ENCODE measurements at regions of chr19 and their contacts with region 1.

Region 1: GRCh38 chr19:8355631-8356402 is 8.1 kb upstream of the ANGPTL4 start:
- DNase-seq: peak; percentile 72
- ATAC-seq: peak; percentile 91
- H3K4me3 ChIP-seq: no peak overlapping the region
- H3K27ac ChIP-seq: no peak overlapping the region
- H3K4me1 ChIP-seq: peaks cover 33% of the 10 kb centered on the region
- H3K27me3 ChIP-seq: no peaks in the 10 kb centered on the region
- CTCF ChIP-seq: no peak

Region 2: GRCh38 chr19:8396563-8397203 is 40.9 kb after region 1 on chr19:
- intact Hi-C with region 1: loop called (anchors 5 kb)
- DNase-seq: peak; percentile 85
- ATAC-seq: peak; percentile 78
- H3K4me3 ChIP-seq: no peak overlapping the region
- H3K27ac ChIP-seq: no peak overlapping the region
- H3K4me1 ChIP-seq: peaks cover 59% of the 10 kb centered on the region
- H3K27me3 ChIP-seq: no peaks in the 10 kb centered on the region
- CTCF ChIP-seq: peak; percentile 67